Breast epithelium (tissue), 4 donors: ENCODE measurements at regions of chr16 and their contacts with region 1.

Region 1: GRCh38 chr16:63467513-63467912 is 1431.3 kb upstream of the CDH8 start:
- DNase-seq: no peak
- H3K4me3 ChIP-seq: no peak overlapping the region
- H3K27ac ChIP-seq: no peak overlapping the region
- H3K4me1 ChIP-seq: no peaks in the 10 kb centered on the region
- H3K27me3 ChIP-seq: no peaks in the 10 kb centered on the region
- CTCF ChIP-seq: no peak
- POLR2A ChIP-seq: no peak

Region 2: GRCh38 chr16:65172356-65172755 is 1704.8 kb after region 1 on chr16:
- intact Hi-C with region 1: loop called (anchors 5 kb)
- DNase-seq: no peak
- H3K4me3 ChIP-seq: no peak overlapping the region
- H3K27ac ChIP-seq: no peak overlapping the region
- H3K4me1 ChIP-seq: no peaks in the 10 kb centered on the region
- H3K27me3 ChIP-seq: no peaks in the 10 kb centered on the region
- CTCF ChIP-seq: no peak
- POLR2A ChIP-seq: no peak